ENCODE measurements at regions of chr22 and their contacts with region 1.

Region 1: GRCh38 chr22:32528984-32529982 is 54.7 kb downstream of the FBXO7 start:
- DNase-seq: peak; percentile 73 to 80
- H3K4me3 ChIP-seq: no peak overlapping the region
- H3K27ac ChIP-seq: no peak overlapping the region
- H3K4me1 ChIP-seq: peaks cover 13% of the 10 kb centered on the region
- H3K27me3 ChIP-seq: no peaks in the 10 kb centered on the region
- CTCF ChIP-seq: peak; percentile 98

Region 2: GRCh38 chr22:32603656-32604435 is 74.6 kb after region 1 on chr22:
- CTCF ChIA-PET with region 1: interaction called, 3 read pairs
- POLR2A ChIA-PET with region 1: no interaction called
- intact Hi-C with region 1: loop called (anchors 5 kb)
- DNase-seq: no peak
- H3K4me3 ChIP-seq: no peak overlapping the region
- H3K27ac ChIP-seq: no peak overlapping the region; the same call in 1 of the 2 replicates
- H3K4me1 ChIP-seq: peaks cover 24% of the 10 kb centered on the region
- H3K27me3 ChIP-seq: no peaks in the 10 kb centered on the region
- CTCF ChIP-seq: no peak

Region 3: GRCh38 chr22:32660292-32660691 is 131.0 kb after region 1 on chr22:
- CTCF ChIA-PET with region 1: no interaction called
- POLR2A ChIA-PET with region 1: no interaction called
- intact Hi-C with region 1: loop called (anchors 1 kb)
- DNase-seq: peak in 1 of 2 experiments; percentile 55
- H3K4me3 ChIP-seq: no peak overlapping the region
- H3K27ac ChIP-seq: no peak overlapping the region
- H3K4me1 ChIP-seq: peaks cover 1% of the 10 kb centered on the region; the same call in 1 of the 2 replicates
- H3K27me3 ChIP-seq: no peaks in the 10 kb centered on the region
- CTCF ChIP-seq: peak; percentile 75

Region 4: DNA sequence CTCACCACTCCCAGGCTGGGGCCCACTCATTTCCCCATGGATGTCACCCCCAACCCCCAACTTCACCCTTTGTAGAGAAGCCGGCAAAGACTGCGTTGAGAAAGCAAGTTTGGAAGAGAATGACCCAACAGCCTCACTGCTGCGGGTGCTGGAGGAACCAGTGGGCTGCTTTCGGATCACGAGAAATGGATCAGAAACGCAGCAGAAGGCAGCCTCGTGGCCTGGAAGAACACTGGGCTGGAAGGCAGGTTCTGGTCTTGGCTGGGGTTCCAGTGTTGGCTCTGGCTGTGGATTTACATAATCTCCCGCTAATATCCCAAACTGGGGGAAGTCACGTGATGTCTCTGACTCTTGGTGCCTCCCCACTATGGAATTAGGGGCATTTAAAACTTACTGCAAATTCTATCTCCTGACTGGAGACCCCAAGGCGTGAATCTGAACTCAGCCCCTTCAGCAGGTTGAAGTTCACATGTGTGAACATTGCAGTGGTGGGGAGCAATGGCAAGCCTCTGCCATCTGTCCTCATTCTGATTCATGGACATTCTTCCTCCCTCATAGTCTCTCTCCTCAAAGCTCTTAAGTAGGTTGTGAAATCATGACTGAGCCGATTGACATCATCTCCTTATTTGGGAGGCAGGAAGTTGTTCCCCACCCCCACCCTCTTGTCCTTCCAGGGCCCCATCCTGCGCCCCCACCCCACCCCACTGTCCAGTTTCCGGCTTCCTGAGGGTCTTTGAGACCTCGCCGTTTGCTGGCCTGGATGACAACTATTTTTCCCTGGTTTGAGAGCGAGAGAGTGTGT is 235.2 kb after region 1 on chr22:
- CTCF ChIA-PET with region 1: no interaction called
- POLR2A ChIA-PET with region 1: no interaction called
- intact Hi-C with region 1: loop called (anchors 1 kb)
- DNase-seq: peak in 1 of 2 experiments; percentile 79
- H3K4me3 ChIP-seq: no peak overlapping the region
- H3K27ac ChIP-seq: peak overlapping the region; percentile 52
- H3K4me1 ChIP-seq: peaks cover 53% of the 10 kb centered on the region
- H3K27me3 ChIP-seq: no peaks in the 10 kb centered on the region
- CTCF ChIP-seq: no peak

Region 5: GRCh38 chr22:32985899-32986765 is 456.8 kb after region 1 on chr22:
- CTCF ChIA-PET with region 1: interaction called, 16 read pairs
- POLR2A ChIA-PET with region 1: no interaction called
- intact Hi-C with region 1: loop called (anchors 1 kb)
- DNase-seq: peak; percentile 65 to 74
- H3K4me3 ChIP-seq: no peak overlapping the region
- H3K27ac ChIP-seq: no peak overlapping the region
- H3K4me1 ChIP-seq: peaks cover 27% of the 10 kb centered on the region
- H3K27me3 ChIP-seq: no peaks in the 10 kb centered on the region
- CTCF ChIP-seq: peak; percentile 93

Region 6: DNA sequence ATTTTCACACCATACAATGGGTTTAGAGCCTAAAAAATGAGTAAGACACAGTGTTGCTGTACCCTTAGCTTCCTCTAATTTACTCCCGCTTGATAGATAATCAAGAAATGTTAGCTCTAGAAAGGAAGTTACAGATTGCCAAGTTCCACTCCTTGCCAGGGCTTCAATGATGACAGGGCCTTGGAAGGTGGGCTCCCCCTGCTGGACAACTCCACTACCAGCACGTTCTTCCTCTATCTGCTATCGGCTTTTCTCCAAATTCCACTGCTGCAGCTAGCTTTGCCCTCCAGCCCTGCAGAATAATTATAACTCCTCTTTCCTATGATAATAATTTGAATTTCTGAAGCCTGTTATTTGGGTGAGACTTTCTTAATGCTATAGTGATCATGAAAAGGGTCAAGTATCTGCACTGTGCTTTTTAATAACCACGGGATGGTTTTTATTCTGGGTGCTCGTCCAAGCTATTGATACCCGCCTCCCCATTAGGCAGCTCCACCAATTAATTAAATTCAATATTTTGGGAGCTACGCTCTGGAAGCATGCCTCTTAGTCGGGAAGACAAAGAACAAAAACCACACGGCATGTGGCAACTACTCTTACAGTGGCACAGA is 519.9 kb after region 1 on chr22:
- CTCF ChIA-PET with region 1: no interaction called
- POLR2A ChIA-PET with region 1: no interaction called
- intact Hi-C with region 1: loop called (anchors 5 kb)
- DNase-seq: peak; percentile 49 to 50
- H3K4me3 ChIP-seq: no peak overlapping the region
- H3K27ac ChIP-seq: no peak overlapping the region
- H3K4me1 ChIP-seq: no peaks in the 10 kb centered on the region
- H3K27me3 ChIP-seq: peaks cover 56% of the 10 kb centered on the region
- CTCF ChIP-seq: peak; percentile 92